ENCODE measurements at regions of chr19 and their contacts with region 1.

Region 1: GRCh38 chr19:15242840-15243696 is 10.8 kb upstream of the EPHX3 start:
- DNase-seq: no peak
- H3K4me3 ChIP-seq: no peak overlapping the region
- H3K27ac ChIP-seq: no peak overlapping the region
- H3K4me1 ChIP-seq: no peaks in the 10 kb centered on the region
- H3K27me3 ChIP-seq: no peaks in the 10 kb centered on the region
- CTCF ChIP-seq: no peak

Region 2: DNA sequence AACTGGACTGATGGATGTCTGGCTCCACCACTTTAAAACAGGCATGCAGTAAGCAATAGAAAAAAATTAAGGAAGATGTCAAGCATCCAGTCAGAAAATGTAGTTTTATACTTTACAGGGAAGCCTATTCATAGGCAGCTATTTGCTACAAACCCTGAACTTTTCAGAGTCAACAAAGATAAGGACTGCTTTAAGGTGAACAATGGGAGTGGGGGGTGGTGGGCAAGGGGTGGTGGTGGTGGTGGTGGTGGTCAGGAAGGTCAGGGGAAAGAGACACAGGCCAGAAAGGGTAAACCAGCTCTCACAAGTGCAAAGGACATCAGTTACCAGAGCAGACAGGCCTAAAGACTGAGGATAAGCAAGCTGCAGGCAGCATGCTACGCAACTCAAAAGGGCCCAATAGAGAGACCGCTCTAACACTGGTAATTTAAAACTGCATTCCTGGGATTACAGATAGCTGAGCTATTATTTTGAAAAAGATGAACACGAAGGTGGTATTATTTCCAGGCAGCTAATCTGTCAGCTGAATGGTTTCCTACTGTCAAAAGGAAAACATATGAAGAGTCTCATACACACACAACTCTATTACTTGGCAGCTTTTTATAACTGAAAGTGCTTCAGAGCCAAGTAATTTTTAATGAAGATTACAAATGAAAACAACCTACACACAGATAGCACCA is 74.5 kb after region 1 on chr19:
- CTCF ChIA-PET with region 1: interaction called, 11 read pairs
- POLR2A ChIA-PET with region 1: no interaction called
- intact Hi-C with region 1: no loop called
- DNase-seq: no peak
- H3K4me3 ChIP-seq: no peak overlapping the region
- H3K27ac ChIP-seq: peak overlapping the region; percentile 23
- H3K4me1 ChIP-seq: peaks cover 41% of the 10 kb centered on the region
- H3K27me3 ChIP-seq: no peaks in the 10 kb centered on the region
- CTCF ChIP-seq: no peak

Measured in A673 (cell line).